HEK293 (cell line): ENCODE measurements at regions of chr3 and their contacts with region 1.

Region 1: DNA sequence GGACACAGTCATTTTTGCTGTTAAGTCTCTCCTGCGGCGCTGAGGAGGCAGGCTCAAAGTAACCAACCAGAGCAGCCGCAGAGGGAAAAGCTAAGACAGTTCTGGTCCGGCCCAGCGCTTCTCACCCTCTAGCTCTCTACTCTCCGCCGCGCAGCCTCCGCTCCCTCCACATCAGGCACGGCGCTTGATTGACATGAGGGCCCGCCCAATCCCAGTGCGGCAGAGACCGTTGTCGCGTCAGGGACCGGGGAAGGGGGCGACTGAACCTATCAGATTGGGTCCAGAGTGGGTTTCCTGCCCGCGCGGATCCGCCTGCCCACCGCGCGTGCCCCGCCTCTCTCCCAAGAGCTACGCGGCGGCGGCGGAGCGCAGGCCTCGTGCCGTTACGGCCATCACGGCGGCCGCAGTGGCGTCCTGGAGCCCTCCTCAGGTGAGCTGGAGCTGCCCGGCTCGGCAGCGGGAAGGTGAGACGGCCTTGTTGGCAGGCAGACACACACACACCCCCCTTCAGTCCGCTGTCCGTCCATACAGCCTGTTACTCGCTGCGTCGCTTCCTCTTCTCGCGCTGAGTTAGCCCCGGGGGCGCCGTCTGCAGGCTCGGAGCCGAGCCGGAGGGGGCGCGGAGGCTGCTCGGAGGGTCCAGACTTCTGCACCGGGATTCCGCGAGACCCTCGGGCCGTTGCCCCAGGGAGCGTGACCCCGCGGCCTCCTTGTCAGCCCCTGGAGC is at the start of gene NCK1:
- H3K4me3 ChIP-seq: peak within 1 kb of the TSS; percentile 91
- H3K27ac ChIP-seq: peak within 1 kb of the TSS; percentile 76
- H3K4me1 ChIP-seq: no peaks in the 10 kb centered on the region; the same call in 1 of the 2 replicates
- CTCF ChIP-seq: peak; percentile 88

Region 2: GRCh38 chr3:136196401-136197158 is 665.5 kb before region 1 on chr3:
- CTCF ChIA-PET with region 1: no interaction called
- POLR2A ChIA-PET with region 1: interaction called, 11 read pairs
- H3K4me3 ChIP-seq: peak overlapping the region; percentile 83
- H3K27ac ChIP-seq: peak overlapping the region; percentile 99
- H3K4me1 ChIP-seq: no peaks in the 10 kb centered on the region; the same call in 1 of the 2 replicates
- CTCF ChIP-seq: peak; percentile 60

Region 3: GRCh38 chr3:136343446-136344281 is 518.4 kb before region 1 on chr3:
- CTCF ChIA-PET with region 1: no interaction called
- POLR2A ChIA-PET with region 1: no interaction called
- H3K4me3 ChIP-seq: no peak overlapping the region
- H3K27ac ChIP-seq: no peak overlapping the region
- H3K4me1 ChIP-seq: peaks cover 5% of the 10 kb centered on the region; the same call in 1 of the 2 replicates
- CTCF ChIP-seq: no peak

Region 4: GRCh38 chr3:136728918-136729317 is 133.1 kb before region 1 on chr3:
- CTCF ChIA-PET with region 1: no interaction called
- POLR2A ChIA-PET with region 1: no interaction called
- H3K4me3 ChIP-seq: no peak overlapping the region
- H3K27ac ChIP-seq: no peak overlapping the region
- H3K4me1 ChIP-seq: peaks cover 10% of the 10 kb centered on the region; the same call in 1 of the 2 replicates
- CTCF ChIP-seq: no peak